ENCODE measurements at regions of chr14 and their contacts with region 1.

Region 1: DNA sequence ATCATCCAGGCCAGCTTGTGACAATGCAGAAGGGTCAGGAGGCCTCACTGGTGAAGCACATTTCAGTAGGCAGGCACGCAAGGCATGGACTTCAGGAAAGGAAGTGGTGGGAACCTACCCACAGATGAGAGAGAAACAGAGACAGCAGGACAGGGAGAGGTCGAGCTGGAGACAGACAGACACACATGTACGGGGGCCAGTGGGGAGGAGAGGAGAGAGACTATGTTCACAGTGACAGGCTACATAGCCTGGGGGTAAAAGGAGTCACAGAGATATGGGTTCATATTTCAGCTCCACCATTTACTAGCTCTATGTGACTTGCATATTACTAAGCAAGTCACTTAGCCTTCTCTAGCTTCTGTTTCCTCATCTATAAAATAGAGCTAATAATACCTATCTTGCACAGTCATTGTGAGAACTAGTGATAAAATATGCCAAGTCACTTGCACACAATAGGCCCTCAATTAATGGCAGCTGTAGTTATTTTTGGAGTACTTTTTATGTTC is 91.1 kb upstream of the FUT8 start:
- DNase-seq: peak; percentile 62
- ATAC-seq: peak; percentile 77
- H3K4me3 Mint-ChIP-seq: peak overlapping the region; percentile 13
- H3K27ac Mint-ChIP-seq: peak overlapping the region; percentile 87
- H3K4me1 Mint-ChIP-seq: peaks cover 70% of the 10 kb centered on the region
- H3K27me3 Mint-ChIP-seq: no peaks in the 10 kb centered on the region

Region 2: GRCh38 chr14:65302571-65303189 is 18.7 kb before region 1 on chr14:
- CTCF ChIA-PET with region 1: interaction called, 15 read pairs
- POLR2A ChIA-PET with region 1: interaction called, 23 read pairs
- DNase-seq: peak; percentile 86
- ATAC-seq: peak; percentile 81
- H3K4me3 Mint-ChIP-seq: peak overlapping the region; percentile 44
- H3K27ac Mint-ChIP-seq: peak overlapping the region; percentile 78
- H3K4me1 Mint-ChIP-seq: peaks cover 81% of the 10 kb centered on the region
- H3K27me3 Mint-ChIP-seq: no peaks in the 10 kb centered on the region

Region 3: GRCh38 chr14:65308536-65308935 is 12.9 kb before region 1 on chr14:
- CTCF ChIA-PET with region 1: interaction called, 15 read pairs
- POLR2A ChIA-PET with region 1: interaction called, 23 read pairs
- DNase-seq: no peak
- ATAC-seq: no peak
- H3K4me3 Mint-ChIP-seq: no peak overlapping the region
- H3K27ac Mint-ChIP-seq: no peak overlapping the region
- H3K4me1 Mint-ChIP-seq: peaks cover 47% of the 10 kb centered on the region
- H3K27me3 Mint-ChIP-seq: no peaks in the 10 kb centered on the region

Region 4: GRCh38 chr14:65336191-65336591 is 14.8 kb after region 1 on chr14:
- CTCF ChIA-PET with region 1: interaction called, 40 read pairs
- POLR2A ChIA-PET with region 1: interaction called, 20 read pairs
- DNase-seq: peak; percentile 76
- ATAC-seq: peak; percentile 91
- H3K4me3 Mint-ChIP-seq: peak overlapping the region; percentile 74
- H3K27ac Mint-ChIP-seq: peak overlapping the region; percentile 93
- H3K4me1 Mint-ChIP-seq: peaks cover 73% of the 10 kb centered on the region
- H3K27me3 Mint-ChIP-seq: no peaks in the 10 kb centered on the region